ENCODE measurements at regions of chr2 and their contacts with region 1.

Region 1: DNA sequence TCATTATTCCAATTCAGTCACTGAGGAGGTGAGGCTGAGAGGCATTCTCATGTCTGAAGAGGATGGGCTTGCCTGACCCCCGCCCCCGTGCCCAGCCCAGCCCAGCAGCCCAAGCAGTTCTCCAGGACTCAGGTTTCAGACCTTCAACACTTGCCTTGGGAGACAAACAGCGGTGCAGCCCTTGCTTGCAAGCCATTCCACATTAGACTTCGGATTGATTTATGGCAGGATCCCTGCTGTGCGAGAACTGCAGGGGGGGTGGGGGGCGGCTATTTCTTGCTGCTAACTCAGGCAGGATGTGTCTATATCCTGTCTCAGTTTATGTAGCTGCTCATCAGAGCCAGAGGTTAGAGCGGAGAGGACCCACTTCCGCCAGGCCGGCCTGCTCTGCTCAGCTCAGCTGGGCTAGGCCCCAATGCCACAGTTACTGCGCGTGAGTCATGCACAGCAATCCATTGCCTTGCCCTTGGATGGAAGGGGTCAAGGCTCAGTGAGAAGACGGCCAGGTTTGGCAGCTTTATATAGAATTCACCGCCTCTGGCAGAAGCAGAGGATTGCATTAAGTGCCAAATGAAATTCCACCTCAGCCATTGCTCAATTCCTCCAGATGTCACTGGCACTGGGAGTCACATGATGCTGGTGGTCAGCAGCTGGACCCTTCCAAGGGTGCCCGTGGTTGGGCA is 1.8 kb downstream of the GYPC start:
- DNase-seq: peak; percentile 79 to 93
- H3K4me3 ChIP-seq: peak overlapping the region; percentile 85 to 92
- H3K27ac ChIP-seq: peak overlapping the region; percentile 99 to 100
- H3K4me1 ChIP-seq: peaks cover 0 to 70% (median 53%) of the 10 kb centered on the region in 4 donors
- H3K27me3 ChIP-seq: no peaks in the 10 kb centered on the region
- CTCF ChIP-seq: peak; percentile 20 to 35

Region 2: DNA sequence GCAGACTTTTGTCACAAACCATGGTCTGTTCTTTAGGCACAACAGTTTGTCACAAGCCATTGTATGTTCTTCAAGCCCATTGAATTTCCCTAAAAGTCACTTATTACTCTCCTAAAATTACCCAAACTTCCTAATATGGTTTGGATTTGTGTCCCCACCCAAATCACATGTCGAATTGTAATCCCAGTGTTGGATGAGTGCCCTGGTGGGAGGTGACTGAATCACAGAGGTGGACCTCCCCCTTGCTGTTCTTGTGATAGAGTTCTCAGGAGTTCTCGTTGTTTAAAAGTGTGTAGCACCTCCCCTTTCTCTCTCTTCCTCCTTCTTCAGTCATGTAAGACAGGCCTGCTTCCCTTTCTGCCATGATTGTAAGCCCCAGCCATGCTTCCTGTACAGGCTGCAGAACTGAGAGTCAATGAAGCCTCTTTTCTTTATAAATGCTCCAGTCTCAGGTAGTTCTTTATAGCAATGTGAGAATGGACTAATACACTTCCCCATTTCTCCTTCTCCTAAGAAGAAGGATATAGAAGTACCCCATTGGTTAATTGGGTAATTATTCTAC is 13.1 kb before region 1 on chr2:
- intact Hi-C with region 1: no loop called
- DNase-seq: no peak
- H3K4me3 ChIP-seq: no peak overlapping the region
- H3K27ac ChIP-seq: no peak overlapping the region
- H3K4me1 ChIP-seq: no peaks in the 10 kb centered on the region
- H3K27me3 ChIP-seq: no peaks in the 10 kb centered on the region
- CTCF ChIP-seq: no peak

Region 3: DNA sequence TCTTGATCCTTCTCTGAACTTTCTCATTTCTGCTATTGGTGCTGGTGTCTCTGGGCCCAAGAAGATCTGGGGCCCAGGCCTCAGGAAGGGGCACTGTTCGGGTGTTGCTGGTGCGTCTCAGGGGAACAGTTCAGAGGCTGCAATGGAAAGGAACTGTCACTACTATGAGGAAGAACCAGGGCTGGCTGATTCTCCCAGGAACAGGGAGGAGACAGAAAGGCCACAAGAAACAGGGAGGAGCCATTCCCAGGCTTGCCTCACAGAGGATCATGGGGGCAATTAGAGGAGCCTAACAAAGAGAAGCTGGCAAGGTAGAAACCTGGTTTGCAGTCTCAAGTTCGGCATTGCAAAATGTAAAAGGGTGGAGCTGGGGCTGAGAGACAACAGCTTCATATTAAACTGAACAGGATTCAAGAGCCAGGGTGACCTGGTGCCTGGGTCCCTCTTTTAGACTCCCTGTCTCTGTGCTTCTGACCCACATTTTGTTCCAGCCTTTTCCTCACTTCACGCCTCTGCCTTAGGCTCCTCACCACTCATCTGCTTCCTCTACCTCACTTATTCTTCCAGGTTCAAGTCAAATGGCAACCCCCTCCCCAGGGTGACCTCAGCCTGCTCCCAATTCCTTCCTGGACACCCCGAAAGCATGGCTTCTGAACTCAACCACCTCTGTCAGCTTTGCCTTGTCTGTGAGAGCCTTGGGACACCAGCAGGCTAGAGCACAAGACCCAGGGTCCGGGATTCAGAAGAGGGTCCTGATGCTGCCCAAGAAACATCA is 56.6 kb after region 1 on chr2:
- intact Hi-C with region 1: no loop called
- DNase-seq: peak in 1 of 2 donors; percentile 52
- H3K4me3 ChIP-seq: no peak overlapping the region
- H3K27ac ChIP-seq: no peak overlapping the region
- H3K4me1 ChIP-seq: no peaks in the 10 kb centered on the region
- H3K27me3 ChIP-seq: no peaks in the 10 kb centered on the region
- CTCF ChIP-seq: no peak

Region 4: GRCh38 chr2:127072970-127073369 is 415.2 kb after region 1 on chr2:
- intact Hi-C with region 1: loop called (anchors 10 kb)
- DNase-seq: no peak
- H3K4me3 ChIP-seq: no peak overlapping the region
- H3K27ac ChIP-seq: no peak overlapping the region
- H3K4me1 ChIP-seq: no peaks in the 10 kb centered on the region
- H3K27me3 ChIP-seq: no peaks in the 10 kb centered on the region
- CTCF ChIP-seq: no peak